ENCODE measurements at regions of chr15 and their contacts with region 1.

Region 1: DNA sequence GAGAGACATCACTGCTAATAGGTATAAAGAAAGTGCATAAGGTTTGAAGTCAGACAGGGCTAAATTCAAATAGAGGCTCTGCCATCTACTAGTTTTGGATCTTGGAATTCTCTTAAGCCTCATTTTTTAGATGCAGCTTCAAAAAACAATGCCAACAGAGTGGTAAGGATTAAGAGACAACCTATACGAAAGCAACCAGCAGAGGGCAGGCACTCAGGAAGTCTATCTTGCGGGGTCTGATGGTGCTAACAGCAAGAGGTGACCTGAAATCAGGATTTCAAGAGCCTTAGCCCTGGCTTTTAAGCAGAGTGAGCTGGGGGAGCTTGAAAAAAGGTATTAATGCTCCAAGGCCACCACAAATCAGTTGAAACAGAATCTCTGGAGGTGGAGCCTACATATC is 40.7 kb downstream of the LDHAL6B start:
- DNase-seq: peak in 1 of 2 donors; percentile 41
- H3K4me3 ChIP-seq: no peak overlapping the region
- CTCF ChIP-seq: no peak
- POLR2A ChIP-seq: no peak

Region 2: GRCh38 chr15:59299929-59300617 is 52.7 kb after region 1 on chr15:
- intact Hi-C with region 1: loop called (anchors 5 kb)
- DNase-seq: peak; percentile 90 to 94
- H3K4me3 ChIP-seq: no peak overlapping the region
- CTCF ChIP-seq: no peak
- POLR2A ChIP-seq: no peak

Region 3: DNA sequence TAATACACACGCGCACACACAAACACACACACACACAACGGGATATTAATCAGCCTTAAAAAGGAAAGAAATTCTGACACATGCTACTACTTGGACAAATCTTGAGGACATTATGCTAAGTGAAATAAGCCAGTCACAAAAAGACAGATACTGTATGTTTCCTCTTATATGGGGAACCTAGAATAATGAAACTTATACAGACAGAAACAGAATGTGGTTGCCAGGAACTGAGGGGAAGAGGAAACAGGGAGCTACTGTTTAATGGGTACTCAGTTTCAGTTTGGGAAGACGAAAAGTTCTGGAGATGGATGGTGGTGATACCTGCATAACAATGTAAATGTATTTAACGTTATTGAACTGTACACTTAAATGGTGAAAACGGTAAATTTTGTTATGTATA is 1211.4 kb after region 1 on chr15:
- intact Hi-C with region 1: loop called (anchors 5 kb)
- DNase-seq: no peak
- H3K4me3 ChIP-seq: no peak overlapping the region
- CTCF ChIP-seq: no peak
- POLR2A ChIP-seq: no peak

Measured in lower leg skin (tissue), 4 donors.